Endothelial cell of umbilical vein (primary cell): ENCODE measurements at regions of chr1 and their contacts with region 1.

Region 1: GRCh38 chr1:176206961-176207902 is at the start of gene COP1:
- DNase-seq: peak; percentile 95
- H3K4me3 ChIP-seq: peak within 1 kb of the TSS; percentile 77 to 92 (median 87)
- H3K27ac ChIP-seq: peak within 1 kb of the TSS; percentile 80
- H3K4me1 ChIP-seq: peaks cover 15% of the 10 kb centered on the region
- H3K27me3 ChIP-seq: no peaks in the 10 kb centered on the region
- CTCF ChIP-seq: no peak
- POLR2A ChIP-seq: peak; percentile 86
- total RNA-seq, gene COP1: 40.8 and 40.9 TPM in 2 replicates

Region 2: DNA sequence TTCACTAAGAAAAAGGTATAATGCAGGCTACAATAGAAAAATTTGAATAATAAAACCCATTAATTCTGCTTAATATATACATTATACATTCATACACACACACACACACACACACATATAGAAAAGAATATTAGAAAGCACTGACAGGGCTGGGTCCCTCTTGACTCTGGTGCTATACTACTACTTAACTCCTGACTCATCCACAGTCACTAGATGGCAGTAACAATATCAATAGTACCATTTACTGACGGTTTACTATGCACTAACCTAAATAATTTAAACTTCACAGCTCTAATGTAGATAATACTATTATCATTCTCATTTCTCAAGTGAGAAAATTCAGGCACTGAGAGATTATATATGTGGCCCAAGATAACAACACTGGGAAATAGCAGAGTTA is 87.7 kb before region 1 on chr1:
- CTCF ChIA-PET with region 1: interaction called, 5 read pairs
- POLR2A ChIA-PET with region 1: no interaction called
- dilution Hi-C with region 1: no loop called
- intact Hi-C with region 1: loop called (anchors 5 kb)
- DNase-seq: peak; percentile 10
- H3K4me3 ChIP-seq: no peak overlapping the region
- H3K27ac ChIP-seq: no peak overlapping the region
- H3K4me1 ChIP-seq: no peaks in the 10 kb centered on the region
- H3K27me3 ChIP-seq: no peaks in the 10 kb centered on the region
- CTCF ChIP-seq: no peak
- POLR2A ChIP-seq: no peak

Region 3: GRCh38 chr1:176252191-176252590 is 45.0 kb after region 1 on chr1:
- CTCF ChIA-PET with region 1: no interaction called
- POLR2A ChIA-PET with region 1: no interaction called
- dilution Hi-C with region 1: no loop called
- intact Hi-C with region 1: no loop called
- DNase-seq: no peak
- H3K4me3 ChIP-seq: no peak overlapping the region
- H3K27ac ChIP-seq: no peak overlapping the region
- H3K4me1 ChIP-seq: no peaks in the 10 kb centered on the region
- H3K27me3 ChIP-seq: no peaks in the 10 kb centered on the region
- CTCF ChIP-seq: no peak
- POLR2A ChIP-seq: no peak